ENCODE measurements at regions of chr11 and their contacts with region 1.

Region 1: GRCh38 chr11:65418711-65419459 is 3.7 kb upstream of the NEAT1 start:
- DNase-seq: peak; percentile 98 to 99 (median 99)
- H3K4me3 ChIP-seq: peak overlapping the region in 6 of 7 experiments; percentile 25 to 100 (median 82)
- H3K27ac ChIP-seq: peak overlapping the region; percentile 99 to 100
- H3K4me1 ChIP-seq: peaks cover 9 to 71% (median 65%) of the 10 kb centered on the region in 4 experiments
- H3K27me3 ChIP-seq: no peaks in the 10 kb centered on the region

Region 2: DNA sequence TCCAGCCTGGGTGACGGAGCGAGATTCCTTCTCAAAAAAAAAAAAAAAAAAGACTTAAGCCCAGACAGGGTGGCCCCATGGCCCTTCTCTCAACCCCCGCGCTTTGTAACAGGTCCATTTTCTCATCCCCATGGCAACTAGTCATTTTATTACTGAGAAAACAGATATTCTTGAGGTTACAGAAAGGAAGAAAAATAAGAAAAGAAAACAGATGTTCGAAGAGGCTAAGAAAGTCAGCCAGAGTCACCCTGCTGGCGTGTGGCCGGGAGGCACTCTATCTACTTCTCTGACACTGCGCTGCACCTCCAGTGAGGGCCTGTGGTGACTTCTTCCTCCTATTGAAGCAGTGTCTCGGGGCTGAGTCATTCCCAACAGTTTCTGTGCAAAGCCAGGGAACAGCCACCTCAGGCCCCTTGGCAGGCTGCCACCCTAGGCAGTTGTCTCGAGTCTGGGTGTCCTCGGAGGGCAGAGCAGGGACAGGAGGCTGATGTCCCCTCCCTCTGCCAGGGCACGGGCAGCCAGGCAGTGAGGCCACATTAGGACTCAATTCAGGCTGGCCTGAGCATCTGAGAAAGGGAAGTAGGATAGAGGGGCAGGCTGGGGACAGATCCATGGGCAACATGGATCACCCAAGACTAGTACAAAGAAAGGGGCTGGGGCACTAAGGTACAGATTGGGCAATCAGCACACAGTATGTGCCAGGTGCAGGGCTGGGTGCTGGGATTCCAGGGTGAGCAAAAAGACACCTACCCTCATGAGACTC is 268.2 kb before region 1 on chr11:
- CTCF ChIA-PET with region 1: no interaction called
- POLR2A ChIA-PET with region 1: no interaction called
- DNase-seq: peak; percentile 97 to 99 (median 99)
- H3K4me3 ChIP-seq: peak overlapping the region in 5 of 7 experiments; percentile 5 to 59 (median 45)
- H3K27ac ChIP-seq: peak overlapping the region; percentile 80 to 90
- H3K4me1 ChIP-seq: peaks cover 13 to 46% (median 44%) of the 10 kb centered on the region in 4 experiments
- H3K27me3 ChIP-seq: no peaks in the 10 kb centered on the region

Region 3: GRCh38 chr11:65382033-65382807 is 36.7 kb before region 1 on chr11 and contains the start of gene SLC25A45:
- CTCF ChIA-PET with region 1: interaction called, 85 read pairs
- POLR2A ChIA-PET with region 1: interaction called, 51 read pairs
- DNase-seq: peak; percentile 95 to 98 (median 97)
- H3K4me3 ChIP-seq: peak within 1 kb of the TSS; percentile 39 to 80 (median 62)
- H3K27ac ChIP-seq: peak within 1 kb of the TSS; percentile 88 to 93
- H3K4me1 ChIP-seq: peaks cover 2 to 96% (median 87%) of the 10 kb centered on the region in 4 experiments
- H3K27me3 ChIP-seq: no peaks in the 10 kb centered on the region

Region 4: DNA sequence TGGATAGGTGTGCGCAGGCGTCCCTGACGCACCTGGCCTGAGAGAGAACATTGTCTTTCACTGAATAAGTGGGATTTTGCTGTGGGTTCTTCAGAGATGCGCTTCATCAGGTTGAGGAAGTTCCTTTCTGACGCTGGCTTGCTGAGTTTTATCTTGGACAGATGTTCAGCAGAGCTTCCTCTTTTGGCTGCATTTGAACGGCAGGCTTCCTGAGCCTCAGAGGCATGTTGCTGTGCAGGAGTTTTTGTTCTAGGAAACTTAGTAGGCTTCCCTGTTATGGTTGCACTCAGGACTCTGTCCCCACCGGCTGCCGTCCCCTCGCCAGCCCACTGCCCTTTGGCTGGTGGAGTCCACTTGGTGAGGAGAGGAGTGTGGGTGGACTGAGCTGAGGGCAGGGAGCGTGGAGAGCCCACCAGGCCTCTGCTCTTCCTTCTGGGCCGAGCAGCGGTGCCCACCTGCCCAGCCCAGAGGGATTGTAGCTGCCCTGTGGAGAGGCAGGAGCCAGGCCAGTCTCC is 15.2 kb before region 1 on chr11:
- CTCF ChIA-PET with region 1: interaction called, 77 read pairs
- POLR2A ChIA-PET with region 1: interaction called, 55 read pairs
- DNase-seq: peak; percentile 91 to 99 (median 97)
- H3K4me3 ChIP-seq: peak overlapping the region in 4 of 7 experiments; percentile 11 to 46 (median 38)
- H3K27ac ChIP-seq: peak overlapping the region; percentile 79 to 83
- H3K4me1 ChIP-seq: peaks cover 2 to 36% (median 34%) of the 10 kb centered on the region in 4 experiments
- H3K27me3 ChIP-seq: no peaks in the 10 kb centered on the region

Region 5: DNA sequence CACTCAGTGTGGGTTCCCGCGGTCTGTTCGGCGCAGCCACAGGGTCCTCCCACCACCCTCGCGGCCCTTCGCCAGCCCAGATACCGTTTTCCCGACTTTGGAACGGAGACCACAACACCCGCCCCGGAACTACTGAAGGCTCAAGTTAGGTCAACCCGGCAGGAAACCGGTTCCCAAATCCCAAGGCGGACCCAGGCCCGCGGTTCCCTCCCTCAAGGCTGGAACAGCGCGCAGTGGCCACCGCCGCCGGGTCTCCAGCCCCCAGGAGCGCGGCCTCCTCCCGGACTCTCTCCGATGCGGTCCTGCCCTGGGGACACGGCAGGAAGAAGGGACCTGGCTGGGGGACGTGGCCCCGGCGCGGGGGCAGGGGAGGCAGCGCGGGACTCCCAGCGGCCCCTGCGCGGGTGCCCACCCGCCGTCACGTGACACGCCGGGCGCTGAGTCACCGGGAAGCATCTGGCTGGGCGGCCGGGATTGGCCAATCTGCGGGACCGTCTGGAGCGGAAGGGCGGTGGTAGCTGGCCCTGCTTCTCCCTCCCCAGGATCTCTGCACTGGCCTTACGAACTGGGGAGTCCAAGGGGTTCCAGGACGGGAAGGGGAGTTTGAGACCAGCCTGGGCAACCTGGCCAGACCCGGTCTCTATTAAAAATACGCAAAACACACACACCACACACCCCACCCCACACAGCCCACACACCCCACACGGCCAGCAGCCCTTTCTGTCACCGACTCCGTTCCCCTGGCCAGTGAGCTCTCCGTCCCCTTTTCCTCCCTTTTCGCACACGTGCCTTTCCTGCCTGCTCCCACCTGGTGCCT is 58.5 kb after region 1 on chr11:
- CTCF ChIA-PET with region 1: interaction called, 15 read pairs
- POLR2A ChIA-PET with region 1: interaction called, 92 read pairs
- DNase-seq: peak; percentile 91 to 97 (median 96)
- H3K4me3 ChIP-seq: peak overlapping the region; percentile 42 to 88 (median 83)
- H3K27ac ChIP-seq: peak overlapping the region; percentile 98
- H3K4me1 ChIP-seq: peaks cover 9 to 55% (median 48%) of the 10 kb centered on the region in 4 experiments
- H3K27me3 ChIP-seq: no peaks in the 10 kb centered on the region

Region 6: GRCh38 chr11:65506770-65507505 is 88.1 kb after region 1 on chr11:
- CTCF ChIA-PET with region 1: interaction called, 76 read pairs
- POLR2A ChIA-PET with region 1: interaction called, 747 read pairs
- DNase-seq: peak; percentile 85 to 96 (median 96)
- H3K4me3 ChIP-seq: peak overlapping the region in 2 of 7 experiments; percentile 28 to 100
- H3K27ac ChIP-seq: peak overlapping the region in 1 of 2 experiments; percentile 100
- H3K4me1 ChIP-seq: peaks cover 18 to 46% (median 39%) of the 10 kb centered on the region in 4 experiments
- H3K27me3 ChIP-seq: no peaks in the 10 kb centered on the region

Region 7: GRCh38 chr11:65524741-65525545 is 106.1 kb after region 1 on chr11 and contains the start of gene SCYL1:
- CTCF ChIA-PET with region 1: no interaction called
- POLR2A ChIA-PET with region 1: no interaction called
- DNase-seq: peak in 2 of 3 donors; percentile 75 to 77
- H3K4me3 ChIP-seq: peak within 1 kb of the TSS; percentile 67 to 85 (median 77)
- H3K27ac ChIP-seq: peak within 1 kb of the TSS in 1 of 2 experiments; percentile 79
- H3K4me1 ChIP-seq: peaks cover 10 to 44% (median 38%) of the 10 kb centered on the region in 4 experiments
- H3K27me3 ChIP-seq: no peaks in the 10 kb centered on the region

Region 8: GRCh38 chr11:65615229-65615941 is 196.5 kb after region 1 on chr11 and contains the start of gene PCNX3:
- CTCF ChIA-PET with region 1: no interaction called
- POLR2A ChIA-PET with region 1: no interaction called
- DNase-seq: peak; percentile 100
- H3K4me3 ChIP-seq: peak within 1 kb of the TSS; percentile 73 to 98 (median 86)
- H3K27ac ChIP-seq: peak within 1 kb of the TSS; percentile 82 to 93
- H3K4me1 ChIP-seq: peaks cover 4 to 50% (median 46%) of the 10 kb centered on the region in 4 experiments
- H3K27me3 ChIP-seq: no peaks in the 10 kb centered on the region

Region 9: GRCh38 chr11:65652511-65653231 is 233.8 kb after region 1 on chr11:
- CTCF ChIA-PET with region 1: no interaction called
- POLR2A ChIA-PET with region 1: no interaction called
- DNase-seq: peak; percentile 96 to 98 (median 97)
- H3K4me3 ChIP-seq: peak overlapping the region; percentile 20 to 78 (median 66)
- H3K27ac ChIP-seq: peak overlapping the region; percentile 93 to 94
- H3K4me1 ChIP-seq: peaks cover 13 to 42% (median 33%) of the 10 kb centered on the region in 4 experiments
- H3K27me3 ChIP-seq: no peaks in the 10 kb centered on the region